ENCODE measurements at regions of chr17 and their contacts with region 1.

Region 1: GRCh38 chr17:38879878-38880682 is 10.2 kb downstream of the LASP1 start:
- DNase-seq: peak in 3 of 5 donors; percentile 56 to 65 (median 63)
- ATAC-seq: peak; percentile 16 to 52 (median 50)
- H3K4me3 ChIP-seq: peak overlapping the region in 7 of 12 donors; percentile 4 to 24 (median 21)
- H3K27ac ChIP-seq: peak overlapping the region; percentile 34 to 87 (median 63)
- H3K4me1 ChIP-seq: peaks cover 8 to 99% (median 81%) of the 10 kb centered on the region in 12 donors
- H3K27me3 ChIP-seq: no peaks in the 10 kb centered on the region
- CTCF ChIP-seq: no peak
- POLR2A ChIP-seq: no peak

Region 2: GRCh38 chr17:38893607-38894006 is 13.5 kb after region 1 on chr17:
- intact Hi-C with region 1: loop called in 2 of 10 experiments (anchors 2 kb)
- DNase-seq: peak; percentile 59 to 84 (median 71)
- ATAC-seq: peak in 3 of 4 donors; percentile 53 to 66 (median 55)
- H3K4me3 ChIP-seq: no peak overlapping the region
- H3K27ac ChIP-seq: peak overlapping the region; percentile 38 to 85 (median 68)
- H3K4me1 ChIP-seq: peaks cover 27 to 96% (median 56%) of the 10 kb centered on the region in 12 donors
- H3K27me3 ChIP-seq: no peaks in the 10 kb centered on the region
- CTCF ChIP-seq: no peak
- POLR2A ChIP-seq: no peak

Region 3: GRCh38 chr17:38922538-38923297 is 42.6 kb after region 1 on chr17:
- intact Hi-C with region 1: loop called in 2 of 10 experiments (anchors 2 to 5 kb)
- DNase-seq: peak in 4 of 5 donors; percentile 79 to 89 (median 82)
- ATAC-seq: peak; percentile 26 to 70 (median 66)
- H3K4me3 ChIP-seq: no peak overlapping the region
- H3K27ac ChIP-seq: peak overlapping the region in 11 of 12 donors; percentile 1 to 84 (median 44)
- H3K4me1 ChIP-seq: peaks cover 3 to 67% (median 47%) of the 10 kb centered on the region in 12 donors
- H3K27me3 ChIP-seq: no peaks in the 10 kb centered on the region
- CTCF ChIP-seq: no peak
- POLR2A ChIP-seq: no peak

Region 4: GRCh38 chr17:38984666-38985065 is 104.6 kb after region 1 on chr17:
- intact Hi-C with region 1: no loop called
- DNase-seq: no peak
- ATAC-seq: no peak
- H3K4me3 ChIP-seq: no peak overlapping the region
- H3K27ac ChIP-seq: no peak overlapping the region
- H3K4me1 ChIP-seq: peaks cover 0 to 19% (median 0%) of the 10 kb centered on the region in 12 donors
- H3K27me3 ChIP-seq: no peaks in the 10 kb centered on the region
- CTCF ChIP-seq: no peak
- POLR2A ChIP-seq: no peak

Measured in heart left ventricle (tissue), 16 donors.